ENCODE measurements at regions of chr11 and their contacts with region 1.

Region 1: GRCh38 chr11:34585735-34586487 is 35.0 kb upstream of the EHF start:
- DNase-seq: no peak
- H3K4me3 ChIP-seq: peak overlapping the region in 1 of 4 donors; percentile 16
- H3K27ac ChIP-seq: no peak overlapping the region
- H3K4me1 ChIP-seq: peaks cover 0 to 4% of the 10 kb centered on the region in 2 donors
- H3K27me3 ChIP-seq: no peaks in the 10 kb centered on the region
- CTCF ChIP-seq: peak; percentile 67 to 88 (median 79)
- POLR2A ChIP-seq: no peak

Region 2: GRCh38 chr11:34890812-34891211 is 304.9 kb after region 1 on chr11:
- intact Hi-C with region 1: loop called (anchors 2 to 5 kb)
- DNase-seq: no peak
- H3K4me3 ChIP-seq: no peak overlapping the region
- H3K27ac ChIP-seq: no peak overlapping the region
- H3K4me1 ChIP-seq: no peaks in the 10 kb centered on the region
- H3K27me3 ChIP-seq: no peaks in the 10 kb centered on the region
- CTCF ChIP-seq: peak; percentile 29 to 72 (median 59)
- POLR2A ChIP-seq: no peak

Region 3: GRCh38 chr11:34972892-34973291 is 387.0 kb after region 1 on chr11:
- intact Hi-C with region 1: no loop called
- DNase-seq: no peak
- H3K4me3 ChIP-seq: no peak overlapping the region
- H3K27ac ChIP-seq: no peak overlapping the region
- H3K4me1 ChIP-seq: peaks cover 0 to 7% of the 10 kb centered on the region in 2 donors
- H3K27me3 ChIP-seq: no peaks in the 10 kb centered on the region
- CTCF ChIP-seq: no peak
- POLR2A ChIP-seq: no peak

Region 4: GRCh38 chr11:35391922-35392813 is 806.3 kb after region 1 on chr11:
- intact Hi-C with region 1: loop called in 1 of 2 experiments (anchors 10 kb)
- DNase-seq: peak; percentile 84 to 92 (median 88)
- H3K4me3 ChIP-seq: no peak overlapping the region
- H3K27ac ChIP-seq: no peak overlapping the region
- H3K4me1 ChIP-seq: peaks cover 5 to 12% of the 10 kb centered on the region in 2 donors
- H3K27me3 ChIP-seq: no peaks in the 10 kb centered on the region
- CTCF ChIP-seq: peak; percentile 79 to 97 (median 92)
- POLR2A ChIP-seq: no peak